ENCODE measurements at regions of chr5 and their contacts with region 1.

Region 1: GRCh38 chr5:12825163-12825562 is 920.9 kb upstream of the CTNND2 start:
- DNase-seq: no peak
- H3K4me3 ChIP-seq: no peak overlapping the region
- H3K4me3 Mint-ChIP-seq: no peak overlapping the region
- H3K27ac ChIP-seq: no peak overlapping the region
- H3K27ac Mint-ChIP-seq: no peak overlapping the region
- H3K4me1 ChIP-seq: no peaks in the 10 kb centered on the region
- H3K4me1 Mint-ChIP-seq: no peaks in the 10 kb centered on the region
- H3K27me3 ChIP-seq: no peaks in the 10 kb centered on the region
- H3K27me3 Mint-ChIP-seq: no peaks in the 10 kb centered on the region

Region 2: DNA sequence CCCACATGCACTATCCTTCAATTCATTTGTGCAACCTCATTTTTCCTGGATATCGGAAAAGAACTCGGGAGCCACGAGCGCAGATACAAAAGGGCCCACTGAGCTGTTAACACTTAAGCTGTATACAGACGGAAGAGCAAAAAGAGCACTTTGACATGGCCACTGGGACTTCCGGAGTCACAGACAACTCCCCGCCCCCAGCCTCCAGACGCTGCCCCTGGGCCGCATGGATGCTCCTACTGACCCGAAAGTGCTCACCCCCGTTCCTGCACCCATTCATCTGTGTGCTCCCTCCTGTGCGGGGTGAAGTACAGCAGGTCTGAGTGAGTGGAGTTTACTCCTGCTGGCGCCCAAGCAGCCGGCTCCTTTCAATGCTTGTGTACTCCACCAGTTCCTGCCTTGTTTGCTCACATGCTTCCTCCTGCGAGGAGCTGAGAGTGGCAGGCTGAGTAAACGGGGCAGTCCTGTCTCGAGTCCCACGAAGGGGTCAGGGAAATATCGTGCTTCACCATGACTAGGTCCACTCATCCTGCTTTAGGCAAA is 19.9 kb before region 1 on chr5:
- CTCF ChIA-PET with region 1: no interaction called
- POLR2A ChIA-PET with region 1: no interaction called
- intact Hi-C with region 1: loop called (anchors 1 kb)
- DNase-seq: no peak
- H3K4me3 ChIP-seq: no peak overlapping the region
- H3K4me3 Mint-ChIP-seq: no peak overlapping the region
- H3K27ac ChIP-seq: no peak overlapping the region
- H3K27ac Mint-ChIP-seq: no peak overlapping the region
- H3K4me1 ChIP-seq: no peaks in the 10 kb centered on the region
- H3K4me1 Mint-ChIP-seq: no peaks in the 10 kb centered on the region
- H3K27me3 ChIP-seq: no peaks in the 10 kb centered on the region
- H3K27me3 Mint-ChIP-seq: no peaks in the 10 kb centered on the region

Region 3: DNA sequence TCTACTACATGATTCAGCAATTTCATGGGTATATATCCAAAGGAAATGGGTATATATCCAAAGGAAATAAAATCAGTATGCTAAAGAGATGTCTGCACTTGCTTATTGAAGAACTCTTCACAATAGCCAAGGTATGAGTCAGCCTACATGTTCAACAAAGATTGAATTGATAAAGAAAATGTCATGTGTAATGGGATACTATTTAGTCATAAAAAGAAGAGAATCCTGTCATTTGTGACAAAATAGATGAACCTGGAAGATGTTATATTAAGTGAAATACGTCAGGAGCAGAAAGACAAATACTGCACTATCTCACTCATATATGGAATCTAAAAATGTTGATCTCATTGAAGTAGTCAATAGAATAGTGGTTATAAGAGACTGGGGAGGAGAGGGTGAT is 23.6 kb after region 1 on chr5:
- CTCF ChIA-PET with region 1: no interaction called
- POLR2A ChIA-PET with region 1: no interaction called
- intact Hi-C with region 1: no loop called
- DNase-seq: no peak
- H3K4me3 ChIP-seq: no peak overlapping the region
- H3K4me3 Mint-ChIP-seq: no peak overlapping the region
- H3K27ac ChIP-seq: no peak overlapping the region
- H3K27ac Mint-ChIP-seq: no peak overlapping the region
- H3K4me1 ChIP-seq: no peaks in the 10 kb centered on the region
- H3K4me1 Mint-ChIP-seq: no peaks in the 10 kb centered on the region
- H3K27me3 ChIP-seq: no peaks in the 10 kb centered on the region
- H3K27me3 Mint-ChIP-seq: no peaks in the 10 kb centered on the region

Measured in CD4-positive, alpha-beta memory T cell (primary cell).